ENCODE measurements at regions of chr18 and their contacts with region 1.

Region 1: GRCh38 chr18:63185984-63186383 is 133.6 kb downstream of the BCL2 start:
- DNase-seq: no peak
- ATAC-seq: no peak
- H3K4me3 ChIP-seq: no peak overlapping the region
- H3K4me3 Mint-ChIP-seq: no peak overlapping the region
- H3K27ac ChIP-seq: no peak overlapping the region
- H3K27ac Mint-ChIP-seq: no peak overlapping the region
- H3K4me1 ChIP-seq: peaks cover 61% of the 10 kb centered on the region
- H3K4me1 Mint-ChIP-seq: peaks cover 84% of the 10 kb centered on the region
- H3K27me3 ChIP-seq: no peaks in the 10 kb centered on the region
- H3K27me3 Mint-ChIP-seq: no peaks in the 10 kb centered on the region
- CTCF ChIP-seq: no peak

Region 2: DNA sequence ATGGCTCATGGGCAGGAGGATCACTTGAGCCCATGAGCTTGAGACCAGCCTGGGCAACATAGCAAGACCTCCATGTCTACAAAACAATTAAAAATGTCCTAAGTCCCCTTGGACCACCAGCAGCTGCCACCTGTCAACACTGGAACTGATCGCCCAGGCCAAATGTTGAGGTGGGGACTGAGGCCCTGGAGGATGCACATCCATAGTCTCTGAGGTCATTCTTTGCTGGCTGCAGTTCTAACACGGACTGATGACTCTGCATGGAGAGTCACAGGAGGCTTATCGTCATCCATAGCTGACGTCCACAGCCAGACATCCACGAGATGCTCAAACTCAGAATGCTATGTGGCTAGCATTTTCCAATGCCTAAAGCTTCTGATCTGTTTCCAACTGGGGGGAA is 17.7 kb before region 1 on chr18:
- CTCF ChIA-PET with region 1: no interaction called
- POLR2A ChIA-PET with region 1: interaction called, 4 read pairs
- intact Hi-C with region 1: loop called (anchors 2 kb)
- DNase-seq: no peak
- ATAC-seq: no peak
- H3K4me3 ChIP-seq: no peak overlapping the region
- H3K4me3 Mint-ChIP-seq: no peak overlapping the region
- H3K27ac ChIP-seq: no peak overlapping the region
- H3K27ac Mint-ChIP-seq: peak overlapping the region; percentile 42
- H3K4me1 ChIP-seq: peaks cover 17% of the 10 kb centered on the region
- H3K4me1 Mint-ChIP-seq: peaks cover 54% of the 10 kb centered on the region
- H3K27me3 ChIP-seq: no peaks in the 10 kb centered on the region
- H3K27me3 Mint-ChIP-seq: no peaks in the 10 kb centered on the region
- CTCF ChIP-seq: no peak

Region 3: DNA sequence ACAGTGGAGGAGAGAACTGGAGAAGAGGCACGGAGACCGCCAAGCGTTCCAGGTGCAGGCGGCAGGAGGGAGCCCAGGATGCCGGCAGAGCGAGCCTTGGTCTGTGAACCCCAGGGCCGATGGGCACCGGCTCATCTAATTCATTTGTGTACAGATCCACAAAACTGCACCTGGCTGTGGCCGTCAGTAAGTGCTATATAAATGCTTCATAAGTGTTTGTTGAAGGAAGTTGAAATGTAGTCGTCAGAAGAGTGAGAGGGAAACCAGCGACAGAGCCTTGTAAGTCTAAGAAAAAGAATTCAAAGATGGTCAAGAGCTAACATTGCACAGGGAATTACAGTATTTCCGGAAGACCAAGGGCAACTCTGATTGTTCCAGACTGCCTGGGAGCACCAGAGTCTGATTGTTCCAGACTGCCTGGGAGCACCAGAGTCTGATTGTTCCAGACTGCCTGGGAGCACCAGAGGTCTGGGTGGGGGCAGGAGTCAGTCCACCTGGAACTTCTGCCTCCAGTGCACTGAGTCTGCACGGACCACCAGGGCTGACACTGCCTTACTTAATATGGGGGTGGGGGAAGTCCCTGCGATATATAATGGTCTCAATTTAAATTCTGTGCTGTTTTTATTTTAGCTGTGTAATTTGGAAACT is 21.3 kb after region 1 on chr18:
- CTCF ChIA-PET with region 1: no interaction called
- POLR2A ChIA-PET with region 1: no interaction called
- intact Hi-C with region 1: loop called in 1 of 2 experiments (anchors 2 kb)
- DNase-seq: peak in 2 of 9 experiments; percentile 21 to 31
- ATAC-seq: peak; percentile 50
- H3K4me3 ChIP-seq: peak overlapping the region; percentile 13 to 50
- H3K4me3 Mint-ChIP-seq: peak overlapping the region; percentile 79
- H3K27ac ChIP-seq: peak overlapping the region; percentile 36
- H3K27ac Mint-ChIP-seq: peak overlapping the region; percentile 92
- H3K4me1 ChIP-seq: peaks cover 98% of the 10 kb centered on the region
- H3K4me1 Mint-ChIP-seq: peaks cover 93% of the 10 kb centered on the region
- H3K27me3 ChIP-seq: no peaks in the 10 kb centered on the region
- H3K27me3 Mint-ChIP-seq: no peaks in the 10 kb centered on the region
- CTCF ChIP-seq: no peak